Activated CD4-positive, alpha-beta memory T cell treated with anti-CD3 and anti-CD28 coated beads, Interleukin-2, amount 10 ng/mL, durations not matched to agents 7 days and 5 days (primary cell): ENCODE measurements at regions of chrX and their contacts with region 1.

Region 1: DNA sequence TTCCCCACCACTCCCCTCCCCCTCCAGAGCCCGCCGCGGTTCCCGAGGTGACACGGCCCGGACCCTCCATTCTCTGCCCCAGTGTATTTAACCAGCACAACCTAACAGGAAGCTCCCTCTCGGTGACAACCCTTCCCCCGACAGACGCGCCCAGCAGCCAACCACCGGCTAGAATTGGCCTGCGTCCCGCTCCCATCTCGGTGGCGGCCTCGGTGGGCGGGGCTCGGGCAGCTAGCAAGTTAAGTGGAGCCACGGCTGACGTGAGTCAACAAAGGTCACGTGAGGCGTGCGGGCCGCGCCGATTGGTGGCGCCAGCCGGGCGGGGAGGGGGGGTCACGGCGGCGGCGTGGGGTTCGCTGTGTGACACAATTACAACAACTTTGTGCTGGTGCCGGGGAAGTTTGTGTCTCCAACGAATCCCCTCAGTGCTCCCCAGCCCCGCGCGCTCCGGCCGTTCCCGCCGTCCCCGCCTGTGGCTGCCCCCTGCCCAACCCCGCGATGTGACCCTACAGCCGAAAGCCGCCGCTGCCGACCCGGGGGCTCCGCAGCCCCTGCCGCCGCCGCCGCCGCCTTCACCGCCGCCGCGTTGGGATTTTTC is at the start of gene KDM6A:
- DNase-seq: peak; percentile 96
- H3K4me3 Mint-ChIP-seq: peak within 1 kb of the TSS; percentile 96
- H3K27ac Mint-ChIP-seq: peak within 1 kb of the TSS; percentile 98
- H3K4me1 Mint-ChIP-seq: peaks cover 20% of the 10 kb centered on the region
- H3K27me3 Mint-ChIP-seq: no peaks in the 10 kb centered on the region
- total RNA-seq, gene KDM6A: 27.2 to 28.0 TPM

Region 2: DNA sequence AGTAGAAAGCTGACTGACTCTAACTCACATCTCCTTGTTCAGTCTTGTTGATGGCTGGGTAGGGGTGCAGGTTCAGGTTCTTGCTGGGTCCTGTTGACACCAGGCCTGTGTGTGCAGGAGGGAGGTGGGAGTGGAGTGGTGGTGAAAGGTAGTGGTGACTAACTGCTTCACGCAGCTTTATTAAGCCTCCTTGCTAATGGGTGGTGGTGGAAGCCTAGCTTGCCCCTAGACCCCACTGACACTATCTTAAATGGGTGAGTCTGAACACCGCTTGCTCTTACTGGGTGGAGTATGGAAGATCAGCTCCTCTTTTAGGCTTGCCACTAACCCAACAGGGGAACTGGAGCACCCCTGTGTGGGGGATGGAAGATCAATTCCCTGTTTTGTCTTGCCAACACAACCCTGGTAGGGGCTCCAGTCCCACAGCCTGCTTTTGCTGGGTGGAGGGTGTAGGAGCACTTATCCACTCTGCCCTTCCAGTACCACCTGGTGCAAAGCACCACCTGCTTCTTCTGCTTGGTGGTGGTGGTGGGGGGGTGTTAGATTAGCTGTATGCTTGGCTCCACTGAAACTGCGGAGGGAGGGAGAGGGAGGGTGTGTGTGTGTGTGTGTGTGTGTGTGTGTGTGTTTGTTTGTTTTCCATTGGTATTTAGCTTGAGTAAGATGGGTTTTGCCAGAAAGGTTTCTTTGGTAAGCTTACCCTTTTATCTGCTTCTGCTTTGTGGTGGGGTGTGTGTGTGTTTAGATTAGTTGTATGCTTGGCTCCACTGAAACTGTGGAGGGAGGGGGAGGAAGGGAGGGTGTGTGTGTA is 25.7 kb after region 1 on chrX:
- CTCF ChIA-PET with region 1: no interaction called
- POLR2A ChIA-PET with region 1: interaction called, 15 read pairs
- DNase-seq: no peak
- H3K4me3 Mint-ChIP-seq: no peak overlapping the region
- H3K27ac Mint-ChIP-seq: peak overlapping the region; percentile 44
- H3K4me1 Mint-ChIP-seq: peaks cover 34% of the 10 kb centered on the region
- H3K27me3 Mint-ChIP-seq: no peaks in the 10 kb centered on the region

Region 3: GRCh38 chrX:45070116-45071007 is 197.4 kb after region 1 on chrX:
- CTCF ChIA-PET with region 1: interaction called, 3 read pairs
- POLR2A ChIA-PET with region 1: interaction called, 36 read pairs
- DNase-seq: no peak
- H3K4me3 Mint-ChIP-seq: no peak overlapping the region
- H3K27ac Mint-ChIP-seq: peak overlapping the region; percentile 74
- H3K4me1 Mint-ChIP-seq: peaks cover 48% of the 10 kb centered on the region
- H3K27me3 Mint-ChIP-seq: no peaks in the 10 kb centered on the region